Kidney (tissue), 22 donors: ENCODE measurements at regions of chrX and their contacts with region 1.

Region 1: DNA sequence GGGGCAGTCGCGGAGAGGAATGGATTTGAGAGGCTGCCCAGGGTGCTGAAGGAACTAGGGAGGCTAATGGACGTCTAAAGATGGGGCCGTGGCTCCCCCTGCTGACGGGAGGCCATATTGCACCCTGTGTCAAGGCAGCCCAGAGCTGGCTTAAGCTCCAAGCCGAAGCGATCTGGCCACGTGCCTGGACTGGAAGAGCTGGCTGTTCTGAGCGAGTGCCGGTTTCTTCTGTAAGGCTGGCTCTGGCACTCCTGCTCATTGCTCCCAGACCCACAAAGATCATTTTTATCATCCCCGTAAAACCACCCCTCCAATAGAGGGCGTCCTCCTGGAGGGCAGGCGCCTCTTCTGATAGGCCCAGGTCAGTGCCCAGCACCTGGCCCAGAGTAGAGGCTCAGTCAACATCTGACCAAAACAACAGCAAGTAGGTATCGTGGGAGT is 5.6 kb downstream of the PNCK start:
- DNase-seq: peak; percentile 86 to 93 (median 89)
- H3K4me3 ChIP-seq: no peak overlapping the region
- H3K27ac ChIP-seq: no peak overlapping the region
- H3K4me1 ChIP-seq: peaks cover 0 to 3% (median 0%) of the 10 kb centered on the region in 3 donors
- H3K27me3 ChIP-seq: no peaks in the 10 kb centered on the region
- CTCF ChIP-seq: peak; percentile 73

Region 2: GRCh38 chrX:153539171-153539978 is 128.6 kb before region 1 on chrX:
- intact Hi-C with region 1: loop called (anchors 5 kb)
- DNase-seq: peak; percentile 53 to 87 (median 75)
- H3K4me3 ChIP-seq: no peak overlapping the region
- H3K27ac ChIP-seq: no peak overlapping the region
- H3K4me1 ChIP-seq: no peaks in the 10 kb centered on the region
- H3K27me3 ChIP-seq: no peaks in the 10 kb centered on the region
- CTCF ChIP-seq: peak; percentile 85